OCI-LY7 (cell line): ENCODE measurements at regions of chr6 and their contacts with region 1.

Region 1: GRCh38 chr6:134870677-134871498 is 79.0 kb downstream of the ALDH8A1 start:
- DNase-seq: peak; percentile 94
- H3K4me3 ChIP-seq: peak overlapping the region; percentile 60
- H3K27ac ChIP-seq: peak overlapping the region; percentile 99
- H3K4me1 ChIP-seq: peaks cover 68% of the 10 kb centered on the region
- CTCF ChIP-seq: no peak

Region 2: DNA sequence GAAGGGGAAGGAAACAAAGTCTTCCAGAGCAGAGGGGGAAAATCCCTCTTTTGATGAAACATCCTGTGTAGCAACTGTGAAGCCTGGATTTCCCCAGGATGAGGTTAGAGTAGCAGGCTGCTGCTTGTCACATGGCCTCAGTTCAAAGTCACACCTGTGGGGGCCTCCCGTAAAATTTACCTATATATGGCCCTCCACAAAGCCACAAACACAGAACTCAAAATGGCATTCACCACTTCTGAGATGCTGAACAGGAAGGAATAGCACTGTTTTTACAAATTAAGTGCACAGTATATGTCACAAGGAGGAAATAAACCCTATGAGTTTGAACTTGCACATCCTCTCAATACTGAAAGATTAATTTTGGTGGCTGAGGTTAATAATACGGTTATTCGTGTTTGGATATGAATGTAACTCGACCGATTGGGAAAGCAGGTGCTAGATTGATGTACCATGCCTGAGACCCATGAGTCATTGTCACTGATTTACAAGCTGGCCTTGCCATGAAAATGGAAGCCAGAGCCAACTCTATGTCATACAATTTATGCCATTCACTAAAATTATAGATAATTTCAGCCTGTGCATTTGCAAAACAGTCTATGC is 623.6 kb before region 1 on chr6:
- CTCF ChIA-PET with region 1: no interaction called
- POLR2A ChIA-PET with region 1: interaction called, 3 read pairs
- intact Hi-C with region 1: loop called (anchors 10 kb)
- DNase-seq: peak; percentile 87
- H3K4me3 ChIP-seq: peak overlapping the region; percentile 46
- H3K27ac ChIP-seq: peak overlapping the region; percentile 91
- H3K4me1 ChIP-seq: peaks cover 57% of the 10 kb centered on the region
- CTCF ChIP-seq: no peak

Region 3: GRCh38 chr6:134822920-134823709 is 47.8 kb before region 1 on chr6:
- CTCF ChIA-PET with region 1: interaction called, 4 read pairs
- POLR2A ChIA-PET with region 1: interaction called, 5 read pairs
- intact Hi-C with region 1: loop called (anchors 5 kb)
- DNase-seq: peak; percentile 65
- H3K4me3 ChIP-seq: no peak overlapping the region
- H3K27ac ChIP-seq: no peak overlapping the region
- H3K4me1 ChIP-seq: peaks cover 12% of the 10 kb centered on the region
- CTCF ChIP-seq: peak; percentile 82

Region 4: DNA sequence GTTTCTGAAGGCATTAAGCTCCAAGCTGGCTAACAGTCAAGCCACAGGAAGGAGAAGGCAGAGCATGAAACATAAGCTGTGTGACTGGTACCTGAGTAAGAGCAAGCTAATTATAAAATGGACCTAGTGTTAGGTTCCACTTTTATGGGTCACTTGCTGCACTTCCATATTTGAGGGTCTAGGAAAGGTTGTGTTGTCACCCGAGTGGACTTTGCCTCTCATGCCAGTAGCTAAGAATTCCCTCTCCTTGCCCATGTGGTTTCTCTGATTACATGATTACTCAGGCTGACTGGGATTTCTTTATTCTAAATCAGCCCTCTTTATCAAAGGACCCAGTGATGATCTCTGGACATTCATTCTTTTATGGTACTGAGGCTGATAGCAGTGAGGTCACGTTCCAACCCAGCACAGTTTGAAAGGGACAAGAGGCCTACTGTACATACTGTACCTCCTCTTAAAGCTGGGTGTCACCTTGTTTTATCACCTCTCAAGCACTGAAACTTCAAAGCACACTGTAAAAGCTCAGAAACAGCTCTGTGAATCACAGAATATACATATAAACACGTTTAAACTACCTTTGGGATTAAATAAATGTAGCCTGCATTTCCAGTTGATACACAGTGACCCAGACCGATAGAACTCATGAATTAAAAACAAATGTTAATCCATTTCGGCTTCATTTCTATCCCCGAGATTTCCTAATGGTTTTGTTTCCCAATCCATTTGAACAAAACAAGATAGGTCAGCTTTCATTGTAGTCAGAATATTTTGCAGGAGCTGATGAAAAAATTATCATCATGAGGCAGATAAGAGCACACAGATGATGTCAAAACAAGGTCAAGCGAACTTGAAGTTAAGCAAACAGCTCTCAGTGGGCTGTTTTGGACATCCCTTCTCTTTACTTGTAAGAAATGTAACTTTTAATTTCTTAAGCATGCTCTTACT is 17.5 kb before region 1 on chr6:
- CTCF ChIA-PET with region 1: interaction called, 4 read pairs
- POLR2A ChIA-PET with region 1: interaction called, 10 read pairs
- intact Hi-C with region 1: no loop called
- DNase-seq: no peak
- H3K4me3 ChIP-seq: no peak overlapping the region
- H3K27ac ChIP-seq: no peak overlapping the region
- H3K4me1 ChIP-seq: no peaks in the 10 kb centered on the region
- CTCF ChIP-seq: no peak

Region 5: DNA sequence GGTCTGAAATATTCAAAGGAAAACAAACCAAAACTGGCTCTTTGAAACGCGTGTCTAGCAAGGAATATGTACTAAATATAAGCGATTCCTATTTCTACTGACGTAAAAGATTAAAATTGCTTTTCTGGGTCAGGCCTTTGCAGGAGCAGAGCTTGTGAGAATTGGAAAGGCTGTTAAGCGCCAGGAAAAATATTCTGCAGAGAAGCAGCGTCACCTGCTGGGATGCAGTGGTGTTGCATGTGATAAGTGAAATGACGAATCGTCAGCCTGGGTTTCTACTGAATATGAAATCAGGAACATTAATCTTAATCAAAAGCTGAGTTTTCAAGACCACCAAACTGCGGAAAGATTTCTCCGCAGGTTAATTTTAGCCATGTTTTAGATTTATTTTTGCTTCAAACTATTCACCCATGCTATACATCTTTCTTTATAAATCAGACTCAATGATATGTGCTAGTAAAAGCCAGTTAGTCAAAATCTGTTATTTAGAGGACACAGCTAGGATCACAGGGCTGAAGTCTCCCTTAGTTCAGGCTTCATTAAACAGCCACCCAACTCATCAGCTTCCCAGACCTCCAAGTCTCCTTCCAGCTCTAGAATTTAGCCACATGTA is 11.6 kb after region 1 on chr6:
- CTCF ChIA-PET with region 1: no interaction called
- POLR2A ChIA-PET with region 1: interaction called, 12 read pairs
- intact Hi-C with region 1: no loop called
- DNase-seq: peak; percentile 65
- H3K4me3 ChIP-seq: no peak overlapping the region
- H3K27ac ChIP-seq: no peak overlapping the region
- H3K4me1 ChIP-seq: peaks cover 6% of the 10 kb centered on the region
- CTCF ChIP-seq: peak; percentile 94

Region 6: DNA sequence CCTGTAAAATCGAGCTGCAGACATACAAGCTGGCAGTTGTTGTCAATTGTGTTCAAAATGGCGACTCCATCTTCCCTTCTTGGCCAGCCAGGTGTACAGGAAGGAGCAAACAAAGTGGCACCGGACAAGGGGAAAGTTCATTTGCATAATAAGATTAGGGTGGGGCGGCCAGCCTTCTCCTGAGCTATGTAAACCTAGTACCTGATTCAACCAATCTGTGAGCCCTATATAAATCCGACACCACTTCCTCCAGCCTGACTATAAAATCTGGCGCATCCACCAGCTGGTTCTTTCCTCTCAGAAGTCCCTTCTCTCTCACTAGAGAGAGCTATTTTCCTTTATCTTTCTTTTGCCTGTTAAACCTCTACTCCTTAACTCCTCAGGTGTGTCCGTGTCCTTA is 191.8 kb after region 1 on chr6:
- CTCF ChIA-PET with region 1: no interaction called
- POLR2A ChIA-PET with region 1: no interaction called
- intact Hi-C with region 1: no loop called
- DNase-seq: peak; percentile 75
- H3K4me3 ChIP-seq: peak overlapping the region; percentile 24
- H3K27ac ChIP-seq: no peak overlapping the region
- H3K4me1 ChIP-seq: peaks cover 13% of the 10 kb centered on the region
- CTCF ChIP-seq: 0 out of 2 replicates have a peak, but pooled peaks have one; percentile 29

Region 7: DNA sequence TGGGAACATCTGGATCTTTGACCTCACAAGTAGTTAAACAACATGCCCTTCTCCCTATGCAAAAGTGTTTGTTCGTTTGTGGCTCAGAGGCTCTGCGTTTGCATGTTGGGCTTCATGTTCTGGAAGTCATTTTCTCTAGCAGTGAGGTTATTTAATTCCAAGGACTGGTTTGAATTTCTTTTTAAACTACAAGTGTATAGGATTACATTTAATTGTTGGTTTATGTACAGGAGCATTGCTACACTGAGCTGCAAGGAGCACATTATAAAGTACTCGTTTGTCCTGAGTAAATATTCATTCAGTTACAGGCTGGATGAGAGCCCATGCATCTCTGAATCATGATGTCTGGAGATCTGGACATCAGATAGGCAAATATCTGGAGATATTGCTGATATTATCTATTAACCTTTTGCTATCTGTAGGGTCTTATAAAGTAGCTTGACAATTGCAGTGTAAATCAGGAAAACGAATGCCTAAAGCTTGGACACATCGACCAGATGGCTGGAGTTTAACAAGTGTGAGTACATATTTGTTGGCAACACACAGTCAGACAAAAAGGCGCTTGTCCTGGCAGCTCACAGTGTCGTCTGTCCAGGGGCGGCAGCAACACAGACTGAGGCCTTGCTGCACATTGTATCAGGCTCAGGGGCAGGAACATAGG is 1065.2 kb after region 1 on chr6:
- CTCF ChIA-PET with region 1: no interaction called
- POLR2A ChIA-PET with region 1: no interaction called
- intact Hi-C with region 1: no loop called
- DNase-seq: no peak
- H3K4me3 ChIP-seq: no peak overlapping the region
- H3K27ac ChIP-seq: no peak overlapping the region
- H3K4me1 ChIP-seq: no peaks in the 10 kb centered on the region
- CTCF ChIP-seq: no peak